ENCODE measurements at regions of chr16 and their contacts with region 1.

Region 1: GRCh38 chr16:35485915-35486314 is 2026.5 kb downstream of the TP53TG3F start:
- DNase-seq: no peak
- ATAC-seq: no peak
- H3K4me3 ChIP-seq: no peak overlapping the region
- H3K27ac ChIP-seq: no peak overlapping the region
- H3K4me1 ChIP-seq: no peaks in the 10 kb centered on the region
- H3K27me3 ChIP-seq: no peaks in the 10 kb centered on the region
- CTCF ChIP-seq: no peak
- EP300 ChIP-seq: no peak
- POLR2A ChIP-seq: no peak
- RAD21 ChIP-seq: no peak

Region 2: DNA sequence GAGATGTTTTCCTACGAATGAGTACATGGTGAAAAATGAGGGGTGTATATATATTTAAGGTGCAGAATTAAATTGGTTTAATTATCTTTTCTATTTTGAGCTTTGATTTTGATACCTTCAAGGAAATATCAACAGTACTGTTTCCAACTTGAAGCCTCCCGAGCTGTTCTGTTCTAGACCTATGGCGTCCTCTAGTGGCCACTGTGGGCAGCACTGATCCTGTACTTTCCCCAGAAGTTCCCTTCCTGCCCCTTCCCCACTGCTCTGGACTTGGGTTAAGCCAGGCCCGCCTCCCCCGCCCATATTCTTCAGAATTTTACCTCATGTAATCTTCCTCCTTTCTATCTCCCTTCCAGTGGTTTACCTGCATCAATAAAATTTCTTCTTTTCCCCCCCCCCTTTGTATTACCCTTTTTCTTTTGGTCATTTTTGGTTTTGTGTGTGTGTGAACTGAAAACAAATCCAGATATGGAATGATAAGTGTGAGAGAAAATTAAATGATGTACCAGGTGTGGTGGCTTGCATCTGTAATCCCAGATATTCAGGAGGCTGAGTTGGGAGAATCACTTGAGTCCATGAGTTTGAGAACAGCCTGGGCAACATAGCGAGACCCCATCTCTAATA is 383.0 kb before region 1 on chr16:
- CTCF ChIA-PET with region 1: no interaction called
- POLR2A ChIA-PET with region 1: no interaction called
- in situ Hi-C with region 1: no loop called
- intact Hi-C with region 1: no loop called
- DNase-seq: peak; percentile 3
- ATAC-seq: no peak
- H3K4me3 ChIP-seq: no peak overlapping the region
- H3K27ac ChIP-seq: no peak overlapping the region
- H3K4me1 ChIP-seq: no peaks in the 10 kb centered on the region
- H3K27me3 ChIP-seq: no peaks in the 10 kb centered on the region
- CTCF ChIP-seq: peak; percentile 32
- EP300 ChIP-seq: no peak
- POLR2A ChIP-seq: no peak
- RAD21 ChIP-seq: no peak

Region 3: DNA sequence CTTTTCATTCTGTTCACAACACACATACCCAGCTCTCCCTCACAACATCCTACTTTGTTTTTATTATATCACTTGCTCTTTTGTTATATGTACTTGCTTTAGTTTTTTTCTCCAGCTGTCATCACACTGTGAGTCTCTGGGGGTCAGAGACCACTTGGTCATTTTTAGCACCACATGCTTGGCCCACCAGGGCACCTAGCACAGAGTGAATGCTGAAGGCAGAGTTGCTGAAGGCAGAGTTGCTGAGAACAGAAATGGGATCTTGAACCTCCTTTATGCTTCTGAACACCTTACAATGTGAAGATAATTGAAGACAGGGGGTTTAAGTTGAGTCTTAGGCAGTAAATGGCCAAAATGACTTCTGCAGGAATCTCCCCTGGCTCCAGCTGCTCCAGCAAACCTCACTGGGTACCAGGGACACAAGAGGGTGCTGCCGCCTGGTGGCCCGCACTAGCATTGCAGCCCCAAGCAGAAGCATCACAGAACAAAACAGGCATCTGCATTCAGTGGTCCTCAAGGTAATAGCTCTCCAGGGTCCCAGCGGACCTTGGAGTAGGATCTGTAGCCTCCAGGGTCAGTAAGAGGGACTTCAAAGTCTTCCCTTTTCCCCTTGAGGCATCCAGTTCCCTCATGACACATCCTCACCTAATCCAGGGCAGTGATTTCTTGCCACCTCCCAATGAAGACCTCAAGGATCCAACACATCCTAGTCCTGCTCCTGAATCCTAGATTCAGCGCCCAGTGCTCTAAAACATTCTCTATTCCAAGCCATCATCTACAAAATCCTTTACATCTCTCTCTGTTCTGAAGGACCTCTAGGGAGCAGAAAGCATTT is 53.9 kb before region 1 on chr16:
- CTCF ChIA-PET with region 1: no interaction called
- POLR2A ChIA-PET with region 1: no interaction called
- in situ Hi-C with region 1: loop called (anchors 10 kb)
- intact Hi-C with region 1: no loop called
- DNase-seq: no peak
- ATAC-seq: no peak
- H3K4me3 ChIP-seq: no peak overlapping the region
- H3K27ac ChIP-seq: no peak overlapping the region
- H3K4me1 ChIP-seq: no peaks in the 10 kb centered on the region
- H3K27me3 ChIP-seq: no peaks in the 10 kb centered on the region
- CTCF ChIP-seq: peak; percentile 32; the same call in 1 of the 2 replicates
- EP300 ChIP-seq: no peak
- POLR2A ChIP-seq: no peak
- RAD21 ChIP-seq: no peak